ENCODE measurements at regions of chr1 and their contacts with region 1.

Region 1: GRCh38 chr1:153192697-153193096 is 10.5 kb upstream of the LELP1 start:
- DNase-seq: peak in 1 of 2 experiments; percentile 78
- H3K4me3 ChIP-seq: no peak overlapping the region
- H3K27ac ChIP-seq: no peak overlapping the region
- H3K4me1 ChIP-seq: 0 out of 7 replicates have a peak, but pooled peaks cover 0 to 2% (median 0%) of the 10 kb centered on the region in 4 experiments
- H3K27me3 ChIP-seq: no peaks in the 10 kb centered on the region
- CTCF ChIP-seq: peak; percentile 84 to 91 (median 84)
- EP300 ChIP-seq: no peak
- POLR2A ChIP-seq: no peak
- RAD21 ChIP-seq: peak; percentile 96 to 97

Region 2: GRCh38 chr1:152878042-152878441 is 314.7 kb before region 1 on chr1 and contains the start of gene SMCP:
- CTCF ChIA-PET with region 1: interaction called, 200 read pairs
- POLR2A ChIA-PET with region 1: no interaction called
- DNase-seq: peak in 1 of 2 experiments; percentile 84
- H3K4me3 ChIP-seq: no peak within 1 kb of the TSS
- H3K27ac ChIP-seq: no peak within 1 kb of the TSS
- H3K4me1 ChIP-seq: no peaks in the 10 kb centered on the region
- H3K27me3 ChIP-seq: no peaks in the 10 kb centered on the region
- CTCF ChIP-seq: peak; percentile 19 to 62 (median 60)
- EP300 ChIP-seq: no peak
- POLR2A ChIP-seq: no peak
- RAD21 ChIP-seq: peak; percentile 53 to 65
- total RNA-seq, gene SMCP: not detected in 2 replicates

Region 3: GRCh38 chr1:152960452-152961044 is 232.1 kb before region 1 on chr1:
- CTCF ChIA-PET with region 1: interaction called, 114 read pairs
- POLR2A ChIA-PET with region 1: no interaction called
- DNase-seq: peak in 1 of 2 experiments; percentile 68
- H3K4me3 ChIP-seq: no peak overlapping the region
- H3K27ac ChIP-seq: no peak overlapping the region
- H3K4me1 ChIP-seq: no peaks in the 10 kb centered on the region
- H3K27me3 ChIP-seq: no peaks in the 10 kb centered on the region
- CTCF ChIP-seq: peak; percentile 75 to 93 (median 84)
- EP300 ChIP-seq: no peak
- POLR2A ChIP-seq: no peak
- RAD21 ChIP-seq: peak; percentile 85 to 90

Region 4: DNA sequence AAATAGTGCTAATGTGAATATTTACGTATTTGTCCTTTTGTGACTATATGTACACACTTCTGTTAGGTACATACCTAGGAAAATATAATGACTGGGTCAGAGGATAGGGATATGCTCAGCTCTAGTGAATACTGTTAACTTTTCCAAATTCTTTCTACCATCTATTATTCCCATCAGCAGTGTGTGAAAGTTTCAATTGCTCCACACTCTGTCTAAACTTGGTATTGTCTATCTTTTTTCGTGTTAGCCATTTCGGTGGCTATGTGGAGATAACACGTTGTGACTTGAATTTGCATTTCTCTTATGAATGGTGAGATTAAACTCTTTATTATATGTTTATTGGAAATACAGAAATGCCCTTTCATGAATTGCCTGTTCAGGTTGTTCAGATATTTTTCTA is 12.1 kb before region 1 on chr1:
- CTCF ChIA-PET with region 1: interaction called, 17 read pairs
- POLR2A ChIA-PET with region 1: no interaction called
- DNase-seq: no peak
- H3K4me3 ChIP-seq: no peak overlapping the region
- H3K27ac ChIP-seq: no peak overlapping the region
- H3K4me1 ChIP-seq: no peaks in the 10 kb centered on the region
- H3K27me3 ChIP-seq: no peaks in the 10 kb centered on the region
- CTCF ChIP-seq: no peak
- EP300 ChIP-seq: no peak
- POLR2A ChIP-seq: no peak
- RAD21 ChIP-seq: no peak

Region 5: DNA sequence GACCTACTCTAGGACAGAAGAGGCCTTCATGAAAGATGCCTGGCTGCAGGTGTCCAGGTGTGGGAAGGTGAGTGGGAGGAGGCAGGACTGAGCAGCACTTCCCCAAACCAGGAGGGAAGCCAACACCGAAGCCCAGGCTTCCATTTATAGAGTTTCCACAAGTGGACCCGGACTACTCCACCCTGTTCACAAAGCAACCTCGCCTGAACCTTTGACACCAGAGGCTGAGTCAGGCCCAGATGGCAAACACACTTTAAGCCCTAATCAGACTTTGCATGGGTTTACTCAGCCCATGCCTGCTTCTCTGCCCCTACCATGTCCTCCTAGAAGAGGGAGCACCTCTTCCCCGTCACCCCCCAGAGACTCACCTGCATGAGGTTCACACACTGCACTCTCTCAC is 38.7 kb after region 1 on chr1:
- CTCF ChIA-PET with region 1: interaction called, 23 read pairs
- POLR2A ChIA-PET with region 1: no interaction called
- DNase-seq: no peak
- H3K4me3 ChIP-seq: no peak overlapping the region
- H3K27ac ChIP-seq: no peak overlapping the region
- H3K4me1 ChIP-seq: no peaks in the 10 kb centered on the region
- H3K27me3 ChIP-seq: no peaks in the 10 kb centered on the region
- CTCF ChIP-seq: no peak
- EP300 ChIP-seq: no peak
- POLR2A ChIP-seq: no peak
- RAD21 ChIP-seq: no peak

Region 6: DNA sequence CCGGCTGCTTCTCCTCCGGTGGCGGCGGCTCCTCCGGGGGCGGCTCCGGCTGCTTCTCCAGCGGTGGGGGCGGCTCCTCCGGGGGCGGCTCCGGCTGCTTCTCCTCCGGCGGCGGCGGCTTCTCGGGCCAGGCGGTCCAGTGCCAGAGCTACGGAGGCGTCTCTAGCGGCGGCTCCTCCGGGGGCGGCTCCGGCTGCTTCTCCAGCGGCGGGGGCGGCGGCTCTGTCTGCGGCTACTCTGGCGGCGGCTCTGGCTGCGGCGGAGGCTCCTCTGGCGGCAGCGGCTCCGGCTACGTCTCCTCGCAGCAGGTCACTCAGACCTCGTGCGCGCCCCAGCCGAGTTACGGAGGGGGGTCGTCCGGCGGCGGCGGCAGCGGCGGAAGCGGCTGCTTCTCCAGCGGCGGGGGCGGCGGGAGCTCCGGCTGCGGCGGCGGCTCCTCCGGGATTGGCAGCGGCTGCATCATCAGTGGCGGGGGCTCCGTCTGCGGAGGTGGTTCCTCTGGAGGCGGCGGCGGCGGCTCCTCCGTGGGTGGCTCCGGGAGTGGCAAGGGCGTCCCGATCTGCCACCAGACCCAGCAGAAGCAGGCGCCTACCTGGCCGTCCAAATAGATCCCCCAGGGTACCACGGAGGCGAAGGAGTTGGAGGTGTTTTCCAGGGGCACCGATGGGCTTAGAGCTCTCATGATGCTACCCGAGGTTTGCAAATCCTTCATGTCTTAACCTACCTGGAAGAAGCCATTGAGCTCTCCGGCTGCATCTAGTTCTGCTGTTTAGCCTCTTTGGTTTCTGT is 68.8 kb after region 1 on chr1:
- CTCF ChIA-PET with region 1: no interaction called
- POLR2A ChIA-PET with region 1: no interaction called
- DNase-seq: peak in 1 of 2 experiments; percentile 74
- H3K4me3 ChIP-seq: peak overlapping the region; percentile 46 to 65 (median 50)
- H3K27ac ChIP-seq: no peak overlapping the region
- H3K4me1 ChIP-seq: 0 out of 7 replicates have a peak, but pooled peaks cover 0 to 3% (median 0%) of the 10 kb centered on the region in 4 experiments
- H3K27me3 ChIP-seq: peaks cover 8 to 49% (median 38%) of the 10 kb centered on the region in 4 experiments
- CTCF ChIP-seq: no peak
- EP300 ChIP-seq: no peak
- POLR2A ChIP-seq: no peak
- RAD21 ChIP-seq: no peak

Measured in H1 (cell line).